Activated naive CD4-positive, alpha-beta T cell treated with anti-CD3 and anti-CD28 coated beads, Interleukin-2, amount 10 ng/mL, durations not matched to agents 7 days and 5 days (primary cell): ENCODE measurements at regions of chr13 and their contacts with region 1.

Region 1: DNA sequence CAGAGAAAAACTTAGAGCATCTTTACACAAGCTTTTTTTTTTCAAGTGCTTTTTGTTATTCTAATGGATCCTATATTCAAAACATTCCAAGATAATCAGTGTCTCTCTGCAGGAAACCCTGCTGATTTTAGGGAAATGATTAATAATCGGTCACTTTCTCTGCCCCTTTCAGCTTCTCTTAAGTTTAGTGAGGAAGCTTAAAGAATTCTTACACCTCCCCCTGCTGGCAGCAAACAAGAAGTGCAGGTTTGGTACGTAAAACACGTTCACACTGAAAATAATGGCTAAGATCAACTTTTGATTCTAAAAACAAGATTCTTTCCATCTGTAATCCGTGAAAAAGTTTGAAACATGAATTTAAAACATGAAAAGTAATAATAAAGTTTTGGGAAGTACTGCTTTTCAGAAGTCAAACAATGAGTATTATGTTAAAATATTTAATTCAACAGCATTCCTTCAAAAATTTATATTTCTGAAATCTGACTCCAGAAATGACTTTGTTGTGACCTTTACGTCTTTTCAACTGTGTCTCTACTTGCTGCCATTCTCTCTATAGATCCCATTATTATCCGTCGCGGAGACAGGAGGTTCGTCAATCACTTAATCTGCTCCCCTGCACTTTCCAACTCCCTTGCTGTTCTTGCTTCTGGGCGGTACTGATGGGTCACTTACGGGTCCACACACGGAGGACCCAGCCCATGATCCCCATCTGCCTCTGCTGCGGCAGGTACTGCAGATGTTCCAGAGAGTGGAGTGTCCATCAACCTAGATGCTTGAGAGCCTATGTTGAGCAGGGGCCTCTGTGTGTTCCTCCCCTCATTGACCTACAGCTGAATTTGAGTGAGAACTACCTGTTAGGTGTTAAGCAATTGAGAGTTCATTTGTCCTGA is 203.1 kb upstream of the EDNRB start:
- DNase-seq: peak; percentile 51
- H3K4me3 Mint-ChIP-seq: no peak overlapping the region
- H3K27ac Mint-ChIP-seq: no peak overlapping the region
- H3K4me1 Mint-ChIP-seq: peaks cover 2% of the 10 kb centered on the region
- H3K27me3 Mint-ChIP-seq: peaks cover 4% of the 10 kb centered on the region

Region 2: DNA sequence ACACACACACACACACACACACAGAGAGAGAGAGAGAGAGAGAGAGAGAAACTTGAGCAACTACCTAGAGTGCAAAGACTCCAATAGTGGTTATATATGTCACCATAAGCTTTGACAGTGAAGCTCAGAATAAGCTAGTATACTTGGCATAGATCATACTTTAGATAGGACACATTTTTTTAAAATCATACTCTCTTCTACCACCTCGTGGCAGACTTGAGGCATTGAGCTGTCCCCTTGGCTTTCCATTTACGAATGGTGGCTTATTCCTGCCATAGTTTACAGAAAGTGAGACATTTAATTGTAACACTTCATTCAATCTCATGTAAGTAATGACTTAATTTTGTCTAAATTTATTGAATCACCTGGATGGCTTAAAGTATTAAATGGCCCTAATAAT is 311.3 kb before region 1 on chr13:
- CTCF ChIA-PET with region 1: interaction called, 17 read pairs
- DNase-seq: no peak
- H3K4me3 Mint-ChIP-seq: no peak overlapping the region
- H3K27ac Mint-ChIP-seq: no peak overlapping the region
- H3K4me1 Mint-ChIP-seq: peaks cover 3% of the 10 kb centered on the region
- H3K27me3 Mint-ChIP-seq: no peaks in the 10 kb centered on the region